ENCODE measurements at regions of chr7 and their contacts with region 1.

Region 1: GRCh38 chr7:102396027-102397019 is at the start of gene PRKRIP1:
- DNase-seq: peak; percentile 90 to 93
- H3K4me3 ChIP-seq: peak within 1 kb of the TSS; percentile 69 to 94 (median 88)
- H3K27ac ChIP-seq: peak within 1 kb of the TSS; percentile 93
- H3K4me1 ChIP-seq: peaks cover 0 to 6% (median 2%) of the 10 kb centered on the region in 4 experiments; a peak in 2 of 7 replicates
- H3K27me3 ChIP-seq: no peaks in the 10 kb centered on the region
- CTCF ChIP-seq: no peak
- EP300 ChIP-seq: peak in 1 of 2 experiments; percentile 35; a peak in 1 of 3 replicates
- POLR2A ChIP-seq: peak; percentile 39 to 98
- RAD21 ChIP-seq: no peak
- total RNA-seq, gene PRKRIP1: 22.0 and 25.0 TPM in 2 replicates

Region 2: DNA sequence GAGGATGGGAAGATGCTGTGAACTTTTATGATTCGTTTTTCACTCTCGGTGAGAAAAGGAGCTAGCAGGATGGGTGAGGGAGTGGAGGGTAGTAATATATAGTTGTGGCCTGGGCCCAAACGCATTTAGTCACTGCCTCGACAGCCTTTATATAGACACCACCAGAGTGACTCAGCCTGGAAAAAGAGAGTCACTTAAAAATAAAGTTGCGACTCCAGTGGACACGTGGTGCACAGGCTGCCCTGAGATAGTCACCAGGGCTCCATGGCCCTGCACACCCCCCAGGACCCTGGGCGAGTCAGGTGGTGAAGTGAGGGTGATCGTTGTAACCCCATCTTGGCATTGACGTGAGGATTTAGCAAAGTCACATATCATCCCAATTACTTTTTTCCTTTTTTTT is 472.2 kb before region 1 on chr7:
- CTCF ChIA-PET with region 1: no interaction called
- POLR2A ChIA-PET with region 1: no interaction called
- DNase-seq: no peak
- H3K4me3 ChIP-seq: no peak overlapping the region
- H3K27ac ChIP-seq: no peak overlapping the region
- H3K4me1 ChIP-seq: peaks cover 0 to 6% (median 4%) of the 10 kb centered on the region in 4 experiments; a peak in 5 of 7 replicates
- H3K27me3 ChIP-seq: no peaks in the 10 kb centered on the region
- CTCF ChIP-seq: no peak
- EP300 ChIP-seq: no peak
- POLR2A ChIP-seq: no peak
- RAD21 ChIP-seq: no peak

Region 3: GRCh38 chr7:102220229-102220850 is 176.0 kb before region 1 on chr7:
- CTCF ChIA-PET with region 1: no interaction called
- POLR2A ChIA-PET with region 1: no interaction called
- DNase-seq: no peak
- H3K4me3 ChIP-seq: no peak overlapping the region
- H3K27ac ChIP-seq: no peak overlapping the region
- H3K4me1 ChIP-seq: 0 out of 7 replicates have a peak, but pooled peaks cover 0 to 2% (median 0%) of the 10 kb centered on the region in 4 experiments
- H3K27me3 ChIP-seq: no peaks in the 10 kb centered on the region
- CTCF ChIP-seq: peak in 2 of 3 experiments; percentile 10 to 37; a peak in 2 of 4 replicates
- EP300 ChIP-seq: no peak
- POLR2A ChIP-seq: no peak
- RAD21 ChIP-seq: no peak; a peak in 1 of 4 replicates

Region 4: GRCh38 chr7:102230593-102230992 is 165.7 kb before region 1 on chr7:
- CTCF ChIA-PET with region 1: no interaction called
- POLR2A ChIA-PET with region 1: no interaction called
- DNase-seq: no peak
- H3K4me3 ChIP-seq: no peak overlapping the region
- H3K27ac ChIP-seq: no peak overlapping the region
- H3K4me1 ChIP-seq: no peaks in the 10 kb centered on the region
- H3K27me3 ChIP-seq: no peaks in the 10 kb centered on the region
- CTCF ChIP-seq: no peak
- EP300 ChIP-seq: no peak
- POLR2A ChIP-seq: no peak
- RAD21 ChIP-seq: no peak

Region 5: DNA sequence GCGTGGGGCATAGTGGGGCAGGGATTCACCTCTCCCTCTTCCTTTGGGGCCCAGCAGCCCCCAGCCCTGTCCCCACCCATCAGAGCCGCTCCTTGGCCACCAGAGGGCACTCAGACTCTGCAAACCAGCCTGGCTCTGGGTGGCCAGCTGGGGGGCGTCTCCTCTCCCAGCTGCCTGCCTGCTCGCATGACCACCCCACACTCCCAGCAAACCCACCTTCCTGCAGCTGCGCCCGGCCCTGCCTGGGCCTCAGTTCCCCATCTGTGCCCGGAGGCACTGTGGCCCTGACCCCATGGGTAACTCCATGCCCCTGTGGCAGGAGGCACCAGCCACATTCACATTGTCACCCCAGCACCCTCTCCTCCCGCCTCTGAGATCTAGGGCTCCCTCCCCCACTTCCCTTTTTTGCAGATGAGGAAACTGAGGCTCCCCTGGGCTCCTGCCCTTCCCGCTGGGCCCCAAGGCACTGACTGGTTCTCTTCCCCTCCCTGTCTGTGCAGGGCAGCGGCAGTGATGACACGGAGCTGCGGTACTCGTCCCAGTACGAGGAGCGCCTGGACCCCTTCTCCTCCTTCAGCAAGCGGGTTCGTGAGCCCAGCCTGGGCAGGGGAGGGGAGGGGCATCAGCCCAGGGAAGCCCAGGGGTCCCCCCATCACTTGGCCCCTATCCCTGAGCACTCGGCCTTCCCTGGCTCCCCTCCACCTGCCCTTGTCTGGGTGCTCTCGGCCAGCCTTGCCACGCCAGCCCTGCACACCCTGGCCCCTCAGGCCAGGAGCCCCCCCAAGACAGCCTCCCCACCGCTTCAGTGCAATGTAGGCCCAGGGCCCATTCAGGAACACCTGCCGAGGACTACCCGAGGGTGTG is 116.6 kb before region 1 on chr7:
- CTCF ChIA-PET with region 1: interaction called, 118 read pairs
- POLR2A ChIA-PET with region 1: interaction called, 12 read pairs
- DNase-seq: peak; percentile 31 to 84
- H3K4me3 ChIP-seq: no peak overlapping the region
- H3K27ac ChIP-seq: no peak overlapping the region
- H3K4me1 ChIP-seq: peaks cover 0 to 7% (median 5%) of the 10 kb centered on the region in 4 experiments; a peak in 5 of 7 replicates
- H3K27me3 ChIP-seq: no peaks in the 10 kb centered on the region
- CTCF ChIP-seq: peak in 2 of 3 experiments; percentile 88 to 95; a peak in 3 of 4 replicates
- EP300 ChIP-seq: no peak
- POLR2A ChIP-seq: no peak
- RAD21 ChIP-seq: peak; percentile 92 to 96

Region 6: GRCh38 chr7:102412548-102412947 is 16.2 kb after region 1 on chr7:
- CTCF ChIA-PET with region 1: interaction called, 42 read pairs
- POLR2A ChIA-PET with region 1: interaction called, 14 read pairs
- DNase-seq: peak in 1 of 2 experiments; percentile 76
- H3K4me3 ChIP-seq: no peak overlapping the region
- H3K27ac ChIP-seq: no peak overlapping the region
- H3K4me1 ChIP-seq: no peaks in the 10 kb centered on the region
- H3K27me3 ChIP-seq: no peaks in the 10 kb centered on the region
- CTCF ChIP-seq: peak; percentile 55 to 58 (median 57)
- EP300 ChIP-seq: no peak
- POLR2A ChIP-seq: no peak
- RAD21 ChIP-seq: peak; percentile 65 to 69

Region 7: DNA sequence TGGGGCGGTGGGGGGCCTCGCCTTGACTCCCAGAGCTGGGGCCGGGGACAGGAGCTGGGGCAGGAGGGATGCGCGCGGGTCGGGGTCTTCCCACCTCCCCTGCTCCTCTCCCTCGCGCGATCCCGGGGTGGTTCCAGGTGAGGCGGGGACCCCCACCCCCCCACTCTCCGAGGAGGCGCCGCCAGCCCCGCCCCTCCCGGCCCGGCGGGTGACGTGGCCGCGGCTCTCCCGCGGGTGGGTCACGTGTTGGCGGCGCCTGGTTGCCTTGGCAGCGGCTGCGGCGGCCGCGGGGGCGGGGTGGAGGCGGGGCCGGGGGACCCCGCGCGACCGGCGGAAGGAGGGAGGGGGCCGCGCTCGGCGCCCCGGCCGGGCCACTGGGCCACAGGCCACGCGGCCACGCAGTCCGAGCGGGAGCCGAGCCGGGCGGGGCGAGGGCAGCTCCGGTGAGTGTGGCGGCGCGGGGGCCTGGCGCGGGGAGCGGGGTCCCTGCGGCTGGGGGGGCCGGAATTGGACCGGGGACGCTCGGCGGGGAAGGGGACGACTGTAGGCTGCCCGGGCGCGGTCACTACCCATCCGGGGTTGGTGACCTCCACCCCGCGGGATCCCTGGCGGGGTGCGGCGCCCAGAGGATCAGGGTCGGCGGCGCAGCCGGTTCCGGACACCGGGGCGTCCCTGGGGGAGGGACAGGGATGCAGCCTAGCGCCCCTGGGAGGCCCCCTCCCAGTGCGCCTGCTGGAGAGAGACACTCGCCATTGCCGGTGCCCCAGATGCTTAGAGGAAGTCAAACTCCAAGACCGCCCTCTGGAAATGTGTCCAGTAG is 37.1 kb after region 1 on chr7 and contains the start of gene ORAI2:
- CTCF ChIA-PET with region 1: no interaction called
- POLR2A ChIA-PET with region 1: interaction called, 11 read pairs
- DNase-seq: peak in 1 of 2 experiments; percentile 86
- H3K4me3 ChIP-seq: peak within 1 kb of the TSS; percentile 62 to 78 (median 74)
- H3K27ac ChIP-seq: no peak within 1 kb of the TSS; the same call in 1 of the 2 replicates
- H3K4me1 ChIP-seq: peaks cover 0 to 8% (median 5%) of the 10 kb centered on the region in 4 experiments; a peak in 5 of 7 replicates
- H3K27me3 ChIP-seq: no peaks in the 10 kb centered on the region
- CTCF ChIP-seq: no peak
- EP300 ChIP-seq: no peak
- POLR2A ChIP-seq: no peak; a peak in 1 of 3 replicates
- RAD21 ChIP-seq: no peak
- total RNA-seq, gene ORAI2: 20.7 and 22.9 TPM in 2 replicates